OCI-LY7 (cell line): ENCODE measurements at regions of chrX and their contacts with region 1.

Region 1: GRCh38 chrX:37796805-37797204 is 16.9 kb downstream of the CYBB start:
- DNase-seq: peak; percentile 76
- H3K4me3 ChIP-seq: peak overlapping the region; percentile 21
- H3K27ac ChIP-seq: peak overlapping the region; percentile 89
- H3K4me1 ChIP-seq: peaks cover 51% of the 10 kb centered on the region
- CTCF ChIP-seq: no peak

Region 2: GRCh38 chrX:37781814-37782213 is 15.0 kb before region 1 on chrX:
- CTCF ChIA-PET with region 1: no interaction called
- POLR2A ChIA-PET with region 1: interaction called, 16 read pairs
- intact Hi-C with region 1: no loop called
- DNase-seq: no peak
- H3K4me3 ChIP-seq: peak overlapping the region; percentile 87
- H3K27ac ChIP-seq: peak overlapping the region; percentile 64
- H3K4me1 ChIP-seq: peaks cover 82% of the 10 kb centered on the region
- CTCF ChIP-seq: no peak

Region 3: GRCh38 chrX:37942170-37942569 is 145.4 kb after region 1 on chrX:
- CTCF ChIA-PET with region 1: no interaction called
- POLR2A ChIA-PET with region 1: no interaction called
- intact Hi-C with region 1: no loop called
- DNase-seq: no peak
- H3K4me3 ChIP-seq: no peak overlapping the region
- H3K27ac ChIP-seq: no peak overlapping the region
- H3K4me1 ChIP-seq: no peaks in the 10 kb centered on the region
- CTCF ChIP-seq: no peak